ENCODE measurements at regions of chr3 and their contacts with region 1.

Region 1: GRCh38 chr3:185733980-185734724 is 90.7 kb downstream of the IGF2BP2 start:
- DNase-seq: peak; percentile 62
- CTCF ChIP-seq: peak; percentile 51

Region 2: GRCh38 chr3:185757176-185757575 is 23.0 kb after region 1 on chr3:
- CTCF ChIA-PET with region 1: interaction called, 12 read pairs
- POLR2A ChIA-PET with region 1: no interaction called
- DNase-seq: no peak
- CTCF ChIP-seq: no peak

Measured in GM10248 (cell line).